ENCODE measurements at regions of chr9 and their contacts with region 1.

Region 1: GRCh38 chr9:122453677-122454135 is 24.0 kb downstream of the OR1J1 start:
- DNase-seq: no peak
- ATAC-seq: no peak
- H3K4me3 ChIP-seq: no peak overlapping the region
- H3K27ac ChIP-seq: no peak overlapping the region
- H3K4me1 ChIP-seq: no peaks in the 10 kb centered on the region
- H3K27me3 ChIP-seq: no peaks in the 10 kb centered on the region
- CTCF ChIP-seq: no peak
- EP300 ChIP-seq: no peak
- POLR2A ChIP-seq: no peak
- RAD21 ChIP-seq: no peak

Region 2: GRCh38 chr9:122092611-122093506 is 360.8 kb before region 1 on chr9 and contains the start of gene TTLL11:
- CTCF ChIA-PET with region 1: interaction called, 3 read pairs
- POLR2A ChIA-PET with region 1: no interaction called
- in situ Hi-C with region 1: loop called (anchors 10 kb)
- intact Hi-C with region 1: loop called (anchors 5 kb)
- DNase-seq: peak; percentile 85
- ATAC-seq: peak; percentile 90
- H3K4me3 ChIP-seq: peak within 1 kb of the TSS; percentile 69 to 95 (median 80)
- H3K27ac ChIP-seq: peak within 1 kb of the TSS; percentile 46
- H3K4me1 ChIP-seq: peaks cover 56% of the 10 kb centered on the region
- H3K27me3 ChIP-seq: no peaks in the 10 kb centered on the region; a peak in 1 of 5 replicates
- CTCF ChIP-seq: no peak
- EP300 ChIP-seq: no peak
- POLR2A ChIP-seq: peak; percentile 35 to 48; a peak in 1 of 4 replicates
- RAD21 ChIP-seq: no peak; the same call in 1 of the 2 replicates
- total RNA-seq, gene TTLL11: 3.1 and 4.5 TPM in 2 replicates

Region 3: DNA sequence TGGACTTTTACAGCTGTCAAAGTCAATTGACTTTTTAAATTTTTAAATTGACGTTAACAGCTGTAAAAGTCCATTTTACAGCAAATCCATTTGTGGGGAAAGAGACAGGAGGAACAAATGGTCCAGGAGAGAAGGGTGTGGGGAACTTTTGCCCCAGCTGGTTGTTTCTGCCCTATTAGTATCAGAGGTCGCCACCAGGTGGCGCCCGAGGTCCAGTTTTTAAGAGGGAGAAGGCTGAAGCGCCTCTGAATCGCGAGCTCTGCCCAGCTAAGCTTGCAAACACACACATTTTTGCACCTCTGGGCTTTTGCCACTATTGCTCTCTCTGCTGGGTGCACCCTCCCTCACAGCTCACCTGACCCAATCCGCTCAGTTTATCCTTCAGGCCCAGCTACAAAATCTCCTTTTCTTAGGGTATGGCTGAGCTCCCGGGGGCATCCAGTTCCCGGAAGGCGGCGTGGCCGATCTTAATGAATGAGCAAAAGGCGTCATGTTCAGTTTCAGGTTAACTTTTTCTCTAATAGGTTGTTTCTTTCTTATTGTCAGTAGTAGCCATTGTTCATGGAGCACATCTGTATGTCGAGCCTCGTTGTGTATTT is 354.3 kb before region 1 on chr9:
- CTCF ChIA-PET with region 1: interaction called, 3 read pairs
- POLR2A ChIA-PET with region 1: no interaction called
- in situ Hi-C with region 1: loop called (anchors 10 kb)
- intact Hi-C with region 1: loop called (anchors 5 kb)
- DNase-seq: peak; percentile 60
- ATAC-seq: peak; percentile 88
- H3K4me3 ChIP-seq: peak overlapping the region in 1 of 3 experiments; percentile 56; a peak in 1 of 6 replicates
- H3K27ac ChIP-seq: no peak overlapping the region
- H3K4me1 ChIP-seq: peaks cover 23% of the 10 kb centered on the region
- H3K27me3 ChIP-seq: peaks cover 0 to 13% of the 10 kb centered on the region in 2 experiments
- CTCF ChIP-seq: peak; percentile 83
- EP300 ChIP-seq: no peak
- POLR2A ChIP-seq: no peak
- RAD21 ChIP-seq: peak; percentile 81

Region 4: GRCh38 chr9:122125158-122125508 is 328.6 kb before region 1 on chr9:
- CTCF ChIA-PET with region 1: interaction called, 8 read pairs
- POLR2A ChIA-PET with region 1: no interaction called
- in situ Hi-C with region 1: loop called (anchors 10 kb)
- intact Hi-C with region 1: loop called (anchors 1 kb)
- DNase-seq: peak; percentile 53
- ATAC-seq: peak; percentile 84
- H3K4me3 ChIP-seq: peak overlapping the region in 2 of 3 experiments; percentile 21 to 64; a peak in 2 of 6 replicates
- H3K27ac ChIP-seq: no peak overlapping the region
- H3K4me1 ChIP-seq: peaks cover 17% of the 10 kb centered on the region
- H3K27me3 ChIP-seq: peaks cover 0 to 5% of the 10 kb centered on the region in 2 experiments; a peak in 1 of 5 replicates
- CTCF ChIP-seq: peak; percentile 99
- EP300 ChIP-seq: no peak
- POLR2A ChIP-seq: no peak
- RAD21 ChIP-seq: peak; percentile 98

Region 5: GRCh38 chr9:122379340-122379739 is 74.4 kb before region 1 on chr9:
- CTCF ChIA-PET with region 1: no interaction called
- POLR2A ChIA-PET with region 1: no interaction called
- in situ Hi-C with region 1: no loop called
- intact Hi-C with region 1: loop called (anchors 1 kb)
- DNase-seq: no peak
- ATAC-seq: no peak
- H3K4me3 ChIP-seq: no peak overlapping the region
- H3K27ac ChIP-seq: no peak overlapping the region
- H3K4me1 ChIP-seq: peaks cover 26% of the 10 kb centered on the region
- H3K27me3 ChIP-seq: peaks cover 0 to 9% of the 10 kb centered on the region in 2 experiments; a peak in 2 of 5 replicates
- CTCF ChIP-seq: peak; percentile 36; the same call in 1 of the 2 replicates
- EP300 ChIP-seq: no peak
- POLR2A ChIP-seq: no peak
- RAD21 ChIP-seq: no peak

Region 6: GRCh38 chr9:122402403-122402871 is 51.3 kb before region 1 on chr9:
- CTCF ChIA-PET with region 1: no interaction called
- POLR2A ChIA-PET with region 1: no interaction called
- in situ Hi-C with region 1: no loop called
- intact Hi-C with region 1: no loop called
- DNase-seq: peak; percentile 27
- ATAC-seq: no peak
- H3K4me3 ChIP-seq: no peak overlapping the region
- H3K27ac ChIP-seq: no peak overlapping the region
- H3K4me1 ChIP-seq: no peaks in the 10 kb centered on the region
- H3K27me3 ChIP-seq: 0 out of 5 replicates have a peak, but pooled peaks cover 0 to 1% of the 10 kb centered on the region in 2 experiments
- CTCF ChIP-seq: no peak
- EP300 ChIP-seq: no peak
- POLR2A ChIP-seq: no peak
- RAD21 ChIP-seq: no peak

Measured in HepG2 (cell line).